ENCODE measurements at regions of chr16 and their contacts with region 1.

Region 1: DNA sequence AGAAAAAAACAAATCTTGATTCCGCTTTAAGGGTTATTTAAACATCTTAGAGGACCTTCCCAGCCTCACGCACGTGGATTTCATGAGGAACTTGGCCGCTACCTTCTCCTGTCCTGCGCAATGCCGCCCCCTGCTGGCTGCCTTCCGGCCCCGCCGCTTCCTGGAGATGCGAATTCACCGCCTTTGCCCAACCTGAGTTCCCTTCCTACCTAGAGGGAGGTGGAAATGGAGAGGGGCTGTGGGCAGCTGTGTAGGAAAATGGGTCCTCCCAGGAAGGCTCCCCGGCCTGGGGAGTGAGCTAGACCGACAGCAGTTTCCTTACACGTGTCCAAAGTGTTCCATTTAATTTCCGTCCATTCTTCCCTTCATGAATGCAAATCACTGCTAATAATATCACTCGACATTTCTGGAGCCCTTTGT is 1.0 kb upstream of the ABCC12 start:
- DNase-seq: peak; percentile 55 to 85 (median 74)
- ATAC-seq: peak; percentile 61
- H3K4me3 ChIP-seq: no peak overlapping the region
- H3K4me3 Mint-ChIP-seq: no peak overlapping the region
- H3K27ac ChIP-seq: no peak overlapping the region
- H3K27ac Mint-ChIP-seq: no peak overlapping the region
- H3K4me1 ChIP-seq: no peaks in the 10 kb centered on the region
- H3K4me1 Mint-ChIP-seq: peaks cover 3% of the 10 kb centered on the region
- H3K27me3 ChIP-seq: no peaks in the 10 kb centered on the region
- H3K27me3 Mint-ChIP-seq: peaks cover 18% of the 10 kb centered on the region
- CTCF ChIP-seq: peak; percentile 87

Region 2: DNA sequence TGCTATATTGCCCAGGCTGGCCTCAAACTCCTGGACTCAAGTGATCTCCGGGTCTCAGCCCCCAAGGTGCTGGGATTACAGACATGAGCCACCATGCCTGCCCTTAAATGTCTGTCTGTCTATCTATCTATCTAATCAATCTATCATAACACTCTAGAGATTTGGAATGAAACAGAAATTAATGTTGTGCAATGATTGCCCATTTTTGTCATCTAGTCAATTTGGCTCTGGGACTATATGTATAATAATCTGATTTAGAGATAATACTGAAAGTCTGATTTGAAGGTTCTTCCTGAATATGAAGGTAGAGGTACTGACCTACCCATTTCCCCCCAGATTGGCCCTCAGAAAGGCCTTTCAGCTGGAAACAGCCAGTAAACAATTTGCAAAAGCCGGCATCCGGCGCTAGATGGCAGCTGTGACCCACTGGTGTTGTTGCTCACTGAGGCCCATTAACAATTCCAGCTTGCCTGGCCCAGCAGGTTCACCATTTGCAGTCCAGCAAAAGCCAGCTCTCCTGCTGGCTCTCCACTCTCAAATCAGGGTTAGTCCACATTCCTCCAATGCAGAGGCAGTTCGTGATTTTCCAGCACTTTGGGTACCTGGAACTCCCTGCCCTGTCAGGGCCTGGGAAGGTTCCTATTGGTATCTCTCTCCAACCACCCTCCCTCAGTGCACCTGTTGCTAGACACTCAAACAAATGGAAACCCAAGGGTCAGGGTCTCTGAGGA is 1302.9 kb before region 1 on chr16:
- CTCF ChIA-PET with region 1: no interaction called
- POLR2A ChIA-PET with region 1: no interaction called
- intact Hi-C with region 1: loop called in 1 of 2 experiments (anchors 5 kb)
- DNase-seq: peak; percentile 19 to 71 (median 57)
- ATAC-seq: no peak
- H3K4me3 ChIP-seq: no peak overlapping the region
- H3K4me3 Mint-ChIP-seq: no peak overlapping the region
- H3K27ac ChIP-seq: no peak overlapping the region
- H3K27ac Mint-ChIP-seq: no peak overlapping the region
- H3K4me1 ChIP-seq: no peaks in the 10 kb centered on the region
- H3K4me1 Mint-ChIP-seq: no peaks in the 10 kb centered on the region
- H3K27me3 ChIP-seq: no peaks in the 10 kb centered on the region
- H3K27me3 Mint-ChIP-seq: no peaks in the 10 kb centered on the region
- CTCF ChIP-seq: peak; percentile 50

Region 3: DNA sequence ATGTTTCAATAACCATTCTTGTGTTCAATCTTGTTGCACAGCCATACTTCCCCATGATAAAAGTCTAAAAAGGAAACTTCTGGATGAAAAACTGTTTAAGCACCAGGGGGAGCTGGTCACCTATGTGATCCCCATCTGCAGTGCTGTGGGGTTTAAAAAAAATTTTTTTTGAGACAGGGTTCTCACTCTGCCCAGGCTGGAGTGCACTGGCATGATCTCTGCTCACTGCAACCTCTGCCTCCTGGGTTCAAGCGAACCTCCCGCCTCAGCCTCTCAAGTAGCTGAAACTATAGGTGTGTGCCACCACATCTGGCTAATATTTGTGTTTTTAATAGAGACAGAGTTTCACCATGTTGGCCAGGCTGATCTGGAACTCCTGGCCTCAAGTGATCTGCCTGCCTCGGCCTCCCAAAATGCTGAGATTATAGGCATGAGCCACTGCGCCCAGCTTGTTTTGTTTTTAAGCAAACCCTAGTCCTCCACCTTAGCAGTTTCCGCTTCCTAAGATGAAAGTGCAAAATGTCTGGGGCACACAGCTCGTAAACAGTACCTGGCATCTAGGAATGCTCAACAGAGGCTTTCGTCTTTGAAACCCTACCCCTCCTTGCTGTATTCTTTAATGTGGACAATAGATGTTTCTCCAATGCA is 1208.8 kb before region 1 on chr16:
- CTCF ChIA-PET with region 1: no interaction called
- POLR2A ChIA-PET with region 1: no interaction called
- intact Hi-C with region 1: loop called in 1 of 2 experiments (anchors 1 kb)
- DNase-seq: peak in 4 of 9 experiments; percentile 24 to 63 (median 44)
- ATAC-seq: peak; percentile 72
- H3K4me3 ChIP-seq: no peak overlapping the region
- H3K4me3 Mint-ChIP-seq: no peak overlapping the region
- H3K27ac ChIP-seq: no peak overlapping the region
- H3K27ac Mint-ChIP-seq: no peak overlapping the region
- H3K4me1 ChIP-seq: no peaks in the 10 kb centered on the region
- H3K4me1 Mint-ChIP-seq: peaks cover 1% of the 10 kb centered on the region
- H3K27me3 ChIP-seq: no peaks in the 10 kb centered on the region
- H3K27me3 Mint-ChIP-seq: no peaks in the 10 kb centered on the region
- CTCF ChIP-seq: peak; percentile 71

Region 4: DNA sequence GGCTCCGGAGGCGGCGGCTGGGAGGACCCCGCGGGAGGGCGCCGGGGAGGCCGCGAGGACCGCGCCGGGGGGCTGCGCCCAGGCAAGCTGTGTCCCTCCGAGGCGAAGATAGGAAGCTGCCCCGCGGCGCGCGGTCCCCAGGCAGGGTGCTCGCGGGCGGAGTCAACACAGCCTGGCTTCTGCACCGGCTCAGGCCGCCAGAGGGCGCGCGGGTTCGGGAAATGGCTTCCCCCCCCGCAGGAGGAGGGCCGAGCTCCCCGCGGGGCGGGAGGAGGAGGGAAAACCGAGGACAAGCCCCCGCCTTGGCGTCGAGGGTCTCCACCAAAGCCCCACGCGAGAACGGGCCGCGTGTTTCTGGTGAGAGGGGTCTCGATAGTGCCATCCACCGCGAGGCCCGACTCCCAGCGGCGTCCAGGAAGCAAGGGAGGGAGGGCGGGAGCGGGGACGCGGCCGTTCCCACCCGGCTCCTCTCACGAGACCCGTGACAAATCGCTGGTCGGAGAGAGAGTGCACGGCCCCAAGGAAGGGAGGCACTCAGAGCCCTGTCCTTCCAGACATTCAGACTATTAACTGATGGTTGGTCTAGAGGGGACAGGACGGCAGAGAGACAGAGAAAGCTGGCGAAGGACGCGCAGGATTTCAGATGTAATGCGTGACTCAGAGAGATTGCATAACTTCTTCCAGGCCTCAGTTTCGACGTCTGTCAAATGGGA is 1118.9 kb before region 1 on chr16:
- CTCF ChIA-PET with region 1: interaction called, 8 read pairs
- POLR2A ChIA-PET with region 1: no interaction called
- intact Hi-C with region 1: loop called (anchors 1 to 2 kb)
- DNase-seq: peak; percentile 80 to 95 (median 88)
- ATAC-seq: peak; percentile 98
- H3K4me3 ChIP-seq: peak overlapping the region; percentile 65 to 72
- H3K4me3 Mint-ChIP-seq: peak overlapping the region; percentile 79
- H3K27ac ChIP-seq: no peak overlapping the region
- H3K27ac Mint-ChIP-seq: no peak overlapping the region
- H3K4me1 ChIP-seq: peaks cover 7% of the 10 kb centered on the region
- H3K4me1 Mint-ChIP-seq: peaks cover 5% of the 10 kb centered on the region
- H3K27me3 ChIP-seq: peaks cover 0 to 12% of the 10 kb centered on the region in 2 experiments
- H3K27me3 Mint-ChIP-seq: peaks cover 3% of the 10 kb centered on the region
- CTCF ChIP-seq: peak; percentile 88

Region 5: DNA sequence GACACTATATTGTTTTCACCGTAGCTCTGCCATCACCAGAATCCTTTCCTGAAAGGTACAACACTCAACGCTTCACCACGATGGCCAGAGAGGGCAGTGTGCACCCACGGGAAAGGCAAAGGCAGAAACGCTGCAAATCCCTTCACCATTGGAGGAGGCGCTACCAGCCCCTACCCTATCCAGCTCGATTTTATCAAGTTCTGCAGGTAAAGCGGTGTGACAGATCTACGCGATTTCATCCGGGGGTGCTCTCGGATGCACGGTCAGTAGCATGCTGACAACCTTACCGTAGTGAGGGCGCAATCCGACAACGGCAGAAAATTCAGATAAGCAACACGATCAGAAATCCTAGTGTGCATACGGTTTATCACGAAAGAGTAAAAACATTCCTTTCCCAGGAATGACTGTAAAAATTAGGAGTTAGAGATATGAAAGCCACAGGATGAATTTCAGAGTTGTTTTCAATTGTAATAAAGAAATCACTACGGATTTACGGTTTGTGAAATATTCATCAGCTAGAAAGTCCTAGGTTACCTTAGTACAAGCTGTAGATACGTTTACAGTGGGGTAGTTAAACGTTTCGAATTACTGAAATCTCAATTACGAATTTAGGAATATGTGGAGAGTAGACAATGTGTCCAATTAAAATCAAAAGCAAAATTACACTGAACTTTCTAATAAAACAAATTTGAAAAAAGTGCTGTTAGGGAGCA is 1014.9 kb before region 1 on chr16:
- CTCF ChIA-PET with region 1: interaction called, 36 read pairs
- POLR2A ChIA-PET with region 1: no interaction called
- intact Hi-C with region 1: loop called in 1 of 2 experiments (anchors 1 kb)
- DNase-seq: peak; percentile 63 to 87 (median 80)
- ATAC-seq: peak; percentile 77
- H3K4me3 ChIP-seq: peak overlapping the region; percentile 3 to 28
- H3K4me3 Mint-ChIP-seq: peak overlapping the region; percentile 76
- H3K27ac ChIP-seq: no peak overlapping the region
- H3K27ac Mint-ChIP-seq: no peak overlapping the region
- H3K4me1 ChIP-seq: peaks cover 12% of the 10 kb centered on the region
- H3K4me1 Mint-ChIP-seq: peaks cover 21% of the 10 kb centered on the region
- H3K27me3 ChIP-seq: peaks cover 3 to 5% of the 10 kb centered on the region in 2 experiments
- H3K27me3 Mint-ChIP-seq: peaks cover 22% of the 10 kb centered on the region
- CTCF ChIP-seq: peak; percentile 85

Region 6: DNA sequence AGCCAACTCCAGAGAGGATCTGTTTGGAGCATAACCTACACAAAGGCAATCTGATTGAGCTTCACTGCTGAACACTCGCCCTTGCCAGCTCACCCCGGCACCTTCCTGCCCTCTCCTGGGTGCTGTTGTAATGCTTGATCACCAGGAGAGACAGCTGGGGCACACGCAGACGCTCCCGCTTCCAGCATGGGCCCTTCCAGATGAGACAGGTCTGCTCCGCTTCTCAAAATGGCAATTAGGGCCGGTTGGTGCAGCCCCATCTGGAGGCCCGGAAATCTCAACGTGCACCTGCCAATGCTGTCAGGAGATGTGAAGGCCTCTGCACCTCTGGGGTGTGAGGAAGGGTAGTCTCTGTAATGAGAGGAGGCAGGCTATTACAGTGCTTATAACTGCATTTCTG is 207.1 kb before region 1 on chr16:
- CTCF ChIA-PET with region 1: no interaction called
- POLR2A ChIA-PET with region 1: no interaction called
- intact Hi-C with region 1: no loop called
- DNase-seq: no peak
- ATAC-seq: no peak
- H3K4me3 ChIP-seq: no peak overlapping the region
- H3K4me3 Mint-ChIP-seq: no peak overlapping the region
- H3K27ac ChIP-seq: no peak overlapping the region
- H3K27ac Mint-ChIP-seq: no peak overlapping the region
- H3K4me1 ChIP-seq: no peaks in the 10 kb centered on the region
- H3K4me1 Mint-ChIP-seq: no peaks in the 10 kb centered on the region
- H3K27me3 ChIP-seq: no peaks in the 10 kb centered on the region
- H3K27me3 Mint-ChIP-seq: no peaks in the 10 kb centered on the region
- CTCF ChIP-seq: no peak

Region 7: DNA sequence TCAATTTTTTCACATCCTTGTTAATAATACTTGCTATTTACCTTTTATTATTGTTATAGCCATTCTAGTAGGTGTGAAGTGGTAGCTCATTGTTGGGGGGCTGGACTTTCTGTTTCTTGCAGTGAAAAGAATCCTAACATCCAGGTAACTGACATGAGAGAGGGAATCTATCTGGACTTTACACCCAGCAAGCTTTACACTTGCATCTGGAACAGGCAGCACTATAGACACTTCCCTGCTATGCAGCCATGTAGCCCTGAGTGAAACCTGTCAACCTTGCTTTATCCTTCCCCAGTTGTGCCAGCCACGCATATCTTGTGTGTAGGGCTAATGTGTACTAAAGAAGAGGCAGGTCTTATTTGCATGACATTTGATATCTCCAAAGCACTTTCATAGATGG is 15.9 kb after region 1 on chr16:
- CTCF ChIA-PET with region 1: interaction called, 11 read pairs
- POLR2A ChIA-PET with region 1: no interaction called
- intact Hi-C with region 1: no loop called
- DNase-seq: no peak
- ATAC-seq: no peak
- H3K4me3 ChIP-seq: no peak overlapping the region
- H3K4me3 Mint-ChIP-seq: no peak overlapping the region
- H3K27ac ChIP-seq: no peak overlapping the region
- H3K27ac Mint-ChIP-seq: no peak overlapping the region
- H3K4me1 ChIP-seq: no peaks in the 10 kb centered on the region
- H3K4me1 Mint-ChIP-seq: no peaks in the 10 kb centered on the region
- H3K27me3 ChIP-seq: no peaks in the 10 kb centered on the region
- H3K27me3 Mint-ChIP-seq: peaks cover 3% of the 10 kb centered on the region
- CTCF ChIP-seq: no peak

Measured in CD8-positive, alpha-beta T cell (primary cell).